Esophagus squamous epithelium (tissue), 5 donors: ENCODE measurements at regions of chr22 and their contacts with region 1.

Region 1: GRCh38 chr22:42180349-42180842 is 49.8 kb upstream of the CYP2D6 start:
- DNase-seq: no peak
- H3K4me3 ChIP-seq: no peak overlapping the region
- H3K27ac ChIP-seq: peak overlapping the region in 3 of 4 donors; percentile 23 to 65 (median 39)
- H3K4me1 ChIP-seq: peaks cover 0 to 68% (median 25%) of the 10 kb centered on the region in 3 donors
- H3K27me3 ChIP-seq: no peaks in the 10 kb centered on the region
- CTCF ChIP-seq: no peak
- POLR2A ChIP-seq: no peak

Region 2: GRCh38 chr22:42229455-42230149 is 49.2 kb after region 1 on chr22:
- intact Hi-C with region 1: loop called (anchors 10 kb)
- DNase-seq: no peak
- H3K4me3 ChIP-seq: no peak overlapping the region
- H3K27ac ChIP-seq: peak overlapping the region in 1 of 4 donors; percentile 9
- H3K4me1 ChIP-seq: peaks cover 16 to 66% (median 24%) of the 10 kb centered on the region in 3 donors
- H3K27me3 ChIP-seq: no peaks in the 10 kb centered on the region
- CTCF ChIP-seq: no peak
- POLR2A ChIP-seq: no peak